ENCODE measurements at regions of chrX and their contacts with region 1.

Region 1: DNA sequence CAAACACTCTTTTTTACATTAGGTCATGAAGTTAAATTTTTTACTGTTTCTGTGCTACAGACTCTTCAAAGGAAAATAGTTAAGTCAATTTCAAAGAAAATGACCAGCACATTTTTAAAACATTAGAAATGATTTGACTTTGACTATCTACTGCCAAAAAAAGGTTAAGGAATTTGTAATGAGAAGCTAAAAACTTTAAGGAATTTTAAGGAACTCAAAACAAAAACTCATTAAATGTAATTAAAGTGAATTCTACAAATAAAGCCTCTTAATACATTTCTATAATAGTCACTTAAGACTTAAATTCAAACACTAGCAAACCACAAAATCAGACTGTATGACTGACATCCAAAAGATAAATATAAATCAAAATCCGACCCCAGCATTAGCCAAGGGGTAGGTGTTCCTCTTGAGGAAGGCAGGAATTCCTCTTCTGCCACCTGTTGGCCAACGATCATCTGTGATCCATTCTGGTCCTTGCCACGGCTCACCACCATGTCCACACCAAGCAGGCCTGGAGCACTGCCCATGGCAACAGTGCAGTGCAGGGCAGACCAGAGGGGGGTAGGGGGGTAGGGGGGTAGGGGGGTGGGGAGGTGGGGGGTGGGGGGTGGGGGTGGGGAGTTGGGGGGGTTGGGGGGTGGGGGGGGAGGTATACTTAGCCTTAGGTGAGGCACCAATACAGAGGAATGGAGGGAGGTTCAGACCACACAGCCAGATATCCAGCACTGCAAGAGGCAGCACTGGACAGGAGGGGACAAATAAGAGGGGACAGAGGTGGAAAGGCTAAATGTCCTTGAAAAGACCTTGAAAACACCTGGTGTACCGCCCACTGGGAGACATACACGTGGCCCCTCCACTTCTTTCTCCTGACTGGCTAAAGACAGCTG is 287.4 kb downstream of the CHIC1 start:
- DNase-seq: peak; percentile 61

Region 2: GRCh38 chrX:73838123-73838522 is 12.2 kb before region 1 on chrX:
- CTCF ChIA-PET with region 1: no interaction called
- POLR2A ChIA-PET with region 1: interaction called, 14 read pairs
- DNase-seq: no peak

Region 3: GRCh38 chrX:73916931-73917667 is 66.7 kb after region 1 on chrX:
- CTCF ChIA-PET with region 1: no interaction called
- POLR2A ChIA-PET with region 1: interaction called, 25 read pairs
- DNase-seq: peak; percentile 36